Lower leg skin (tissue), 4 donors: ENCODE measurements at regions of chr1 and their contacts with region 1.

Region 1: DNA sequence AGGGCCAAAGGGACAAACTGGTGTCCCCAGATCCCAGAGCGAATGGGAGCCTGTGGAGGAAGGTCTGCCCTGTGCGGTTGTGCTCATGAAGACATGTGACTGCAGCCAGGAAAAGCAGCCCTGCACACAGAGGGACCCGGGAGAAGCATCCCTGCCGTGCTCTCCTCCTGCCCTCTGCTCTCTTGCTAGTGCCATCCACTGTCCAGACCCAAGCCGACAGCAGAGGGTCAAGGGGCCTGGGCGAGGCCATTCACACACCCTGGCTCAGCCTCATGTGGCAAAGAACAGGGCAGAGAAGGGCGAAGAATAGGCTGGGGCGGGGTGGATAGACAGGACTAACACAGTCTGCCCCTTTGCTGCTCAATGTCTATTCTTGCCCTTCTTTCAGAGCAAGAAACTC is 17.4 kb downstream of the DMRTB1 start:
- DNase-seq: no peak
- H3K4me3 ChIP-seq: no peak overlapping the region
- CTCF ChIP-seq: no peak
- POLR2A ChIP-seq: no peak

Region 2: GRCh38 chr1:53498555-53499142 is 22.1 kb after region 1 on chr1:
- intact Hi-C with region 1: loop called (anchors 1 kb)
- DNase-seq: no peak
- H3K4me3 ChIP-seq: no peak overlapping the region
- CTCF ChIP-seq: no peak
- POLR2A ChIP-seq: no peak